Right ventricle myocardium inferior (tissue), 1 donor: ENCODE measurements at regions of chr19 and their contacts with region 1.

Region 1: DNA sequence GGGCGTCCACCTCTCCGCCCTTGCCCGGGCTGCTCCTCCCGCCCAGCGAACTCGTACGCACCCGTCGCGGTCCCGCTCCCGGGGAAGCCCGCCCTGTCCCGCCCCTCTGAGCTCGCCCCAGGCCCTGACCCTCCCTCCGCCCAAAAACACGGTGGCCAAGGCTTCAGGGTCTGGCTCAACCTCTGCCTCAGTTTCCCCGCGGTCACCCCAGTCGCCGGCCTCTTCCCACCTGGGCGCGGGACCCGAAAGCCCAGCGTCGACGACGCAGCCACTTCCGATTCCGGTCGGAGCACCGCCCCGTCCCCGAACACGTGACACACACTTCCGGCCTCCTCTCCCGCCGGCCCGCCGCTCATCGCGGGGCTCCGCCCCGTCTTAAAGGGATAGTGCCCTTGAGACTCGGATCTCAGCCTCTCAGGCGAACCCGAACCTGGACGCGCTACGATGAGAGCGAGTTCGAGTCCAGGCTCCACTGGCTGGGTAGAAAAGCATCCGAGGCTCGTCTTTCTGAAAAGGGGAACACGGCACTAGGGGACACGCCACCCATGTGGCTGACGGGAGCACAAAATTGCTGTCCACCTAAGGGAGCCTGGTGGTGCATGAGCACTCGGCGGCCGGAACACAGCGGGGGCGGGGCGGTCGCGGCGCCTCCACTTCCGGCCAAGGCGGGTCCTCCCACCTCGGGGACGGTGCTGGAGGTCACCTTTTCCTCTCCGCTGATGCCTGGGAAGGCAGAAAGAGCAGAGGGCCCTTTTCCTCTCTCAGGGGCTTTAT is at the start of gene C19orf25:
- DNase-seq: peak; percentile 97
- ATAC-seq: peak; percentile 96
- total RNA-seq, gene C19orf25: 21.5 TPM

Region 2: GRCh38 chr19:1490311-1491113 is 11.4 kb after region 1 on chr19 and contains the start of gene PCSK4:
- intact Hi-C with region 1: loop called (anchors 1 kb)
- DNase-seq: peak; percentile 97
- ATAC-seq: peak; percentile 94
- total RNA-seq, gene PCSK4: 0.89 TPM

Region 3: DNA sequence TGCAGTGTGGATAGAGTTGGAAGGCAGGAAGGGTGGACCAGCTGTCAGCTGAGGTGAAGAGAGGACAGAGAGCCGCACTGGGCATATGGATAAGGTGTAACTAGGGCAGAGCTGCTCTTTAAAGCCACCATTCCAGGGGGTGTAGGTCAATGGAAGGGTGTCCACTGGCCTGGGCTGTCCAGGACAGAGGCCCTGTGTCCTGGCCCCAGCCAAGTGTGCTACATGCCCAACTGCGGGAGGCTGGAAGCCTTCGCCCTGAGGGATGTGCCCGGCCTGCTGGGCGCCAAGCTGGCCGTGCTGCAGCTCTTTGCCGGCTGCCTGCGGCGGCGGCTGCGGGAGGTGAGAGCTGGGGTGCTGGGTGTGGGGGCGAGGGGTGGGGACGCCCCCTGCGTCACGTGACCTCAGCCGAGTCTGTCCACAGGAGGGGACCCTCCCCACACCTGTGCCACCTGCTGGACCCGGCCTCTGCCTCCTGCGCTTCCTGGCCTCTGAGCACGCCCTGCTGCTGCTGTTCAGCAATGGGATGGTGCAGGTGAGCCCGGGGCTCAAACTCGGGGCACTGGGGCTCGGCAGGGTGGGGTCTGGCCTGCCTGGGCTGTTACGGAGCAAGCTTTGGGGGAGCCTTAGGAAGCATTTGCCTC is 54.5 kb after region 1 on chr19:
- intact Hi-C with region 1: no loop called
- DNase-seq: no peak
- ATAC-seq: no peak

Region 4: DNA sequence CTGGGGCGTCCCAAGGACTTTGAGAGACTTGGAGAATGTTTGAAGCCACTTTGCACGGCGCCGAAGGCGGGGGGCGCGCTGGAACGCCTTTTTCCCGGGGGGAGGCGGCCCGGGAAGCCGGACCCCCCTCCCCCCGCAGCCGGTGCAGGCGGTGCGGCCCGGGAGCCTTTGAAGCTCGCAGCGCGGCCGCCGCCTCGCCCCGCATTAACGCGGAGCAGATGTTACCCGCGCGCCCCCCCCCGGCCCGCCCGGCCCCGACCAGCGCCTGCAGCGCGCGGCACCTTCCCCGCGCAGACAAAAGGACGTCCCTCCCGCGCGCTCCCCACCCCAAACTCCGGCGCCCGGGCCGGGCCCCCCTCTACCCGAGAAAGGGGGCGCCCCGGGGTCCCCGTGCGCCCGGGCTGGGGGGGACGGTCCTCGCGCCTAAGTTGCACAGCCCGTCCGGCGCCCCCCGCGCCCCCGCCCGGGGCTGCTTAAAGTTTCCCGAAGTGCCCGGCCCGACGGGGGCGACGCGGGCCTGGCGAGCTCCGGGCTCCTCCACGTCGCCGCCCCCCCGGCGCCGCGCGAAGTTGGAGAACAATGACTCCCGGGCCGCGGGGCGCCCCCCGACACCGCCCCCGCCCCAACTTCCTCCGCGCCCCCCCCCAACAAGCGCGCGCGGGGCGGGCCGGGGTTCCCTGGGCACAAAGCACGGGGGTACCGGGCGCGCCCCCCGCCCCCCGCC is 172.6 kb after region 1 on chr19:
- intact Hi-C with region 1: no loop called
- DNase-seq: no peak
- ATAC-seq: no peak